ENCODE measurements at regions of chr1 and their contacts with region 1.

Region 1: DNA sequence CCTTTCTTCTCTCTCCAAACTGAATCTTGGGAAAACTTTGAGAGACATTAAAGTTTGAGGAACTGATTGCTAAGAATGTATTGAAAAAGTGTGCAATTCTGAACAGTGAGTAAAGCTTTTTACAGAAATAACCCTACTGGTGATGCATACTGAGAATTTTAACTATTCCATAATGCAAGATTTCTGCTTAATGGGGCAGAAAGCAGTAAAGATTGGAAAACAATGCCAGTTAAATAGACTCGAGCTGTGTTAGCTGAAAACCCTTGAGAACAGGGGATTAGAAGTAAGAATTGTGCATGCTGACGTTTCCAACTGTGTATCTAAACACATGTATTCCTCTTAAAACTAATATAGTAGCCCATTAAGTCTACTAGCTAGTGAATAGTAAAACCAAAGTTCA is 1500.2 kb upstream of the PRMT6 start:
- DNase-seq: no peak
- H3K4me3 ChIP-seq: no peak overlapping the region
- H3K27ac ChIP-seq: no peak overlapping the region
- H3K4me1 ChIP-seq: no peaks in the 10 kb centered on the region
- CTCF ChIP-seq: no peak

Region 2: DNA sequence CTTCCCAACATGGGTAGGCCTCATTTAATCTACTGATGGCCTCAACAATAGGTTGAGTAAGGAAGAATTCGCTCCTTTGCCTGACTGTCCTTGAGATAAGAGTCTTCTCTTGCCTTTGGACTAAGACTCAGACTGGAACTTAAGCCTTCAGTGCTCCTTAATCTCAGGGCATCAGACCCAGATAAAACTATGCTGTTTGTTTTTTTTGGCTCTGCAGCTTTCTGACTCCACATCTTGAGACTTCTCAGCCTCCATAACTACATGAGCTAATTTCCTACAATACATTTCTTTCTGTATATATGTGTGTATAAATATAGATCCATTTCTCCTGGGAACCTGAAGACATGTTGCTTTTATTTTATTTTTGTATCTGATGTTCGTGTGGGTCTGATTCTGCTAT is 29.5 kb after region 1 on chr1:
- CTCF ChIA-PET with region 1: no interaction called
- POLR2A ChIA-PET with region 1: no interaction called
- intact Hi-C with region 1: loop called (anchors 1 kb)
- DNase-seq: no peak
- H3K4me3 ChIP-seq: no peak overlapping the region
- H3K27ac ChIP-seq: no peak overlapping the region
- H3K4me1 ChIP-seq: no peaks in the 10 kb centered on the region
- CTCF ChIP-seq: no peak

Region 3: GRCh38 chr1:105632342-105633196 is 76.3 kb after region 1 on chr1:
- CTCF ChIA-PET with region 1: no interaction called
- POLR2A ChIA-PET with region 1: no interaction called
- intact Hi-C with region 1: no loop called
- DNase-seq: no peak
- H3K4me3 ChIP-seq: no peak overlapping the region
- H3K27ac ChIP-seq: no peak overlapping the region
- H3K4me1 ChIP-seq: no peaks in the 10 kb centered on the region
- CTCF ChIP-seq: no peak

Measured in OCI-LY7 (cell line).